ENCODE measurements at regions of chr1 and their contacts with region 1.

Region 1: GRCh38 chr1:205255941-205256780 is 28.4 kb downstream of the TMCC2 start:
- DNase-seq: peak; percentile 93
- ATAC-seq: peak; percentile 95
- H3K4me3 Mint-ChIP-seq: no peak overlapping the region
- H3K27ac Mint-ChIP-seq: no peak overlapping the region
- H3K4me1 Mint-ChIP-seq: peaks cover 2% of the 10 kb centered on the region
- H3K27me3 Mint-ChIP-seq: no peaks in the 10 kb centered on the region

Region 2: DNA sequence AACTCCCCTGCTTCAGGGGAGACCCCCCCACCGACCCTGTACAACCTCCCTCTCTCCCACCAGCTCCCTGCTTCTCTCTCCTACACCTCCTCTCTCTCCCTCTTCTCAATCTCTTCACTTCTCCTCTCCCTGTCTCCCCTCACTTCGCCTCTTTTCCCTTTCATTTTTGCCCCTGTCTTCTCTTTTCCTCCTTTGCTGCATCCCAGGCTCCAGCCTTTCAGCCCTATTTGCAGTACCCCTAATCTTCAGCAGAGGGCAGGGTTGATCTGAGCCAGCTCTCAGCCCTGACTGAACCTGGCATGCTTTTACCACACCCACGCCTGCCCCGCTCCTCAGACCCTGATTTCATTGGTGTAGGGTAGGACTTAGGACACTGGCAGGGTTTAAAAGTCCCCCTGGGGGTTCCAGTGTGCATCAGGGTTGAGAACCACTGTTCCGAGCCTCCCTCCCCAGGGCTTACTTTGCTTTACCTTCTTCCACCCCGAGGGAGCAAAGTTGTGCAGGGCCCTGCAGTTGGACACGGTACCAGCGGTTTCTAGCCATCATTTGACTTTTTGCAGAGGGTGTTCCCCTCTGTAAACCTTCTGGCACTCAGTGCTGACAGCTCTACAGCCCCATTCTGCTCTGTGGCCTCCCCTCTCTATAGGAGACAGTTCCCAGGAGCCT is 280.5 kb before region 1 on chr1:
- CTCF ChIA-PET with region 1: interaction called, 12 read pairs
- POLR2A ChIA-PET with region 1: no interaction called
- intact Hi-C with region 1: loop called (anchors 1 kb)
- DNase-seq: peak; percentile 74
- ATAC-seq: peak; percentile 85
- H3K4me3 Mint-ChIP-seq: no peak overlapping the region
- H3K27ac Mint-ChIP-seq: no peak overlapping the region
- H3K4me1 Mint-ChIP-seq: peaks cover 2% of the 10 kb centered on the region
- H3K27me3 Mint-ChIP-seq: peaks cover 2% of the 10 kb centered on the region

Region 3: GRCh38 chr1:205061665-205062069 is 194.5 kb before region 1 on chr1:
- CTCF ChIA-PET with region 1: interaction called, 9 read pairs
- POLR2A ChIA-PET with region 1: no interaction called
- intact Hi-C with region 1: loop called in 1 of 2 experiments (anchors 1 kb)
- DNase-seq: peak; percentile 89
- ATAC-seq: peak; percentile 89
- H3K4me3 Mint-ChIP-seq: no peak overlapping the region
- H3K27ac Mint-ChIP-seq: no peak overlapping the region
- H3K4me1 Mint-ChIP-seq: peaks cover 3% of the 10 kb centered on the region
- H3K27me3 Mint-ChIP-seq: no peaks in the 10 kb centered on the region

Region 4: DNA sequence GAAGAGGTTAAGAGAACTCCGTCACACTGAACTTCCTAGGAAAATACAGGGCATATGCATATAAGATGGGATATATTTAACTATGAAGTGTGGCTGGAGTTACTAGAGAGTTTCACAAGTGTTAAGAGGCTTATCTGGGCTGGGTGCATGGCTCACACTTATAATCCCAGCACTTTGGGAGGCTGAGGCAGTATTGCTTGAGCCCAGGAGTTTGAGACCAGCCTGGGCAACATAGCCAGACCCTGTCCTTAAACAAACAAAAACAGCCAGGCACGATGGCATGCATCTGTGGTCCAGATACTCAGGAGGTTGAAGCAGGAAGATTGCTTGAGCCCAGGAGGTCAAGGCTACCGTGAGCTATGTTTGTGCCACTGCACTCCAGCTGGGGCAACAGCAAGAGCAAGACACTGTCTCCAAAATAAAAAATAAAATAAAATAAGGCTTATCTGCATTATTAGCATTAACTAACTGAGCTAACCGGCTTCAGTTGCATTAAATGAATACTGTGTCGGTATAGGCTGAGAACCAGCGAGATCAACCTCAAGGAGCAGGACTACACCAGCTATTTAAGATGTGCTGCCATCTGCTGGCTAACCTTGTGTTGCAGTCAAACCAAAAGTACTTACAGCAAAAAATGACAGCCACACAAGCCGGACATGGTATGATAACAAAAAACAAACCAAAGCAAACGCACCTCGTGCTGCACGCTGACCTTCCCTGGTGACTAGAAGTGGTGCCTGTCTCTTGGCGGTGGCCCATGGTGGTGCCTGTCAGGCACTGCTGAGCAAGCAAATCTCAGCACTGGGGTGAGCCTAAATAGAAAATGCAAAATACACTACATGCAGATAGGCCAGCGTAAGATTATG is 114.7 kb before region 1 on chr1:
- CTCF ChIA-PET with region 1: interaction called, 17 read pairs
- POLR2A ChIA-PET with region 1: no interaction called
- intact Hi-C with region 1: loop called in 1 of 2 experiments (anchors 1 kb)
- DNase-seq: peak; percentile 88
- ATAC-seq: peak; percentile 96
- H3K4me3 Mint-ChIP-seq: no peak overlapping the region
- H3K27ac Mint-ChIP-seq: no peak overlapping the region
- H3K4me1 Mint-ChIP-seq: peaks cover 3% of the 10 kb centered on the region
- H3K27me3 Mint-ChIP-seq: no peaks in the 10 kb centered on the region

Region 5: GRCh38 chr1:205273551-205273982 is 17.4 kb after region 1 on chr1:
- CTCF ChIA-PET with region 1: interaction called, 22 read pairs
- POLR2A ChIA-PET with region 1: no interaction called
- intact Hi-C with region 1: no loop called
- DNase-seq: peak; percentile 92
- ATAC-seq: peak; percentile 90
- H3K4me3 Mint-ChIP-seq: no peak overlapping the region
- H3K27ac Mint-ChIP-seq: no peak overlapping the region
- H3K4me1 Mint-ChIP-seq: peaks cover 35% of the 10 kb centered on the region
- H3K27me3 Mint-ChIP-seq: no peaks in the 10 kb centered on the region

Measured in activated CD4-positive, alpha-beta T cell treated with anti-CD3 and anti-CD28 coated beads for 36 hours (primary cell).